Left ventricle myocardium superior (tissue), 1 donor: ENCODE measurements at regions of chr1 and their contacts with region 1.

Region 1: GRCh38 chr1:50368179-50369012 is 54.8 kb downstream of the DMRTA2 start:
- DNase-seq: peak; percentile 32
- ATAC-seq: peak; percentile 38

Region 2: DNA sequence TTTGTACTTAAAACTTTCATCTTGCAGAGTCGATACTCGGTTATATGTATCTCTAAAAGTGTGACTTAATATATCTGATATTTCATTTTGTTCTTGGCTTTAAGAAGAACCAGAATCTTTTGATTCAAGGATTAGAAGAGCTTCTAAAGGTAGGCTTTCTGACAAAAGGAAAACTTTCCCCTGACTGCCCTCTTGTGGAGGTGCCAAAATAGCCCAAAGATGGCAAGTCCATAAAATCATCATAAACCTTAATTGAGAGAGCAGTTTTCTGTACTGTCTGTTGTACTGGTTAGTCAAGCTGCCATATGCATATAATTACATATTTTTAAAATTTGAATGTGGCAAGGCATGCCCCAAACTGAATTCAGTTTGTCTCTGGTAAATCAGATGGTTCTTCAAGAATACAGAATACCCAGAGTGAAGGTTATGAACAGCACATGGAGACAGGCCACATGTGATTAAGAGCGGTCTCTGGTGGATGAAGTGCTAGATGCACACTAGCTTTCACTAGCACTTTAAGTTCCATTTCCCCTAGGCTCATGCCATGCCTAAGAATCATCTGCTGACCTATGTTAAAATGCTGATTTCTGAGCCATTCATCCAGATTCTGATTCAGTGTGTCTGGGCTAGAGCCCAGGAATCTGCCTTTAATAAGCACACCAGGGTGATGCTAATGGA is 287.3 kb before region 1 on chr1:
- intact Hi-C with region 1: no loop called
- DNase-seq: no peak
- ATAC-seq: no peak

Region 3: DNA sequence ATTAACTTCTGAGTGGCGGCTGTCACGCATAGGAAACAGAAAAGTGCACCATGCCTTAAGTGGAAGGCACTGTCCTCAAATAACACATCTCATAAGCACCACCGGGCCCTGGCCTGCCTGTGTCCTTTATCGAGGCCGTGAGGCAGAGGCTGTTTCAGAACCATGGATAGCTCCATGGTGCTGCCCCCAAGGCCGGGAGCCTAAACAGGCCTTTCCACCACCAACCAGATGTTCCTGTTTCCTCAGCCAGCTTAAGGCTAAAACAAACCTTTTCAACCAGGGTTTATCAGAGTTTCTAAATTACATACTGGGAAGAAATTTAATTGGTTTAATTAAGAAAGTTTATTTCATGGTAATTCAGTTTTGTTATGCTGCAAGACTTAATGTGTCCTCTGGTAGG is 59.5 kb before region 1 on chr1:
- intact Hi-C with region 1: no loop called
- DNase-seq: no peak
- ATAC-seq: no peak

Region 4: DNA sequence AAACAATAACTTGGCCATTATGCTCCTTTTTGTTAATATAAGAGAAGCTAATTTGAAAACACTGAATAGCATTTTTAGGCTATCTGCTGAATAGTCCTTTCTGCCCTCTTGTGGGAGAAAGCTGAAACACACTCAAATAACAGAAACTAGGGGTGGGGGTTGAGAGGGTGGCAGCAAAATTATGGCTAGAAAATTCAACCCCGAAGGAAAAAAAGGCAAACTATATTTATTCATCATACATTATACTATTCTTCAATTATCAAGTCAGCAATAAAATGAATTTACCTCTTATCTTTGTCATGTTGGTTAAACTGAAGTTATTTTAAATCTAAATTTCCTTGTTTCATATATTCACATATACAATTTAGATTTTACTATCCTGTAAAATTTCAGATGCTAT is 335.7 kb after region 1 on chr1:
- intact Hi-C with region 1: loop called (anchors 10 kb)
- DNase-seq: no peak
- ATAC-seq: no peak